ENCODE measurements at regions of chr16 and their contacts with region 1.

Region 1: DNA sequence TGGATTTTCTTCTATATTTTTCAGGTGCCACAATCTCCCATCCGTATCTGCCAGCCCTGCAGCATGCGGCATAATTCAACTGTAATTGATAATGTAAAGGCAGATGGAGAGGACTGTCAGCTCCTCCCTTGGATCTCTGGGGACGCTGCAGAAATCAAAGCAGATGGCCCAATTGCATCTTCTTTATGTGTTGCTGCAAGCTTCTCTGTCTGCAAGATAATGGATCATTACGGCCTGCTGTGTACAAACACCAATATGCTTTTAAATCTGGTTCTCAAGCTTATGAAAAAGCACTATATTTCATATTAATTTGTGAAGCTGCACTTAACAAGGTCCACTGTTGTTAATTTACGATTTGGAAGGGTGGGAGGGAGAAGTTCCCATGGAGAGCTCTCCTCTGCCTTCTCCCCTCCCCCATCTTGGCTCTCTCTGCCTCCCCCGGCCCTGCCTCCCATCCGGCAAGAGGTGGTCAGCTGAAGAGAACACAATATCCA is 607.5 kb downstream of the TOX3 start:
- DNase-seq: no peak
- ATAC-seq: no peak
- H3K4me3 ChIP-seq: no peak overlapping the region
- H3K27ac ChIP-seq: no peak overlapping the region
- H3K4me1 ChIP-seq: no peaks in the 10 kb centered on the region
- H3K27me3 ChIP-seq: no peaks in the 10 kb centered on the region
- CTCF ChIP-seq: no peak
- POLR2A ChIP-seq: no peak

Region 2: GRCh38 chr16:51875834-51876600 is 63.4 kb before region 1 on chr16:
- intact Hi-C with region 1: loop called in 1 of 10 experiments (anchors 10 kb)
- DNase-seq: no peak
- ATAC-seq: no peak
- H3K4me3 ChIP-seq: no peak overlapping the region
- H3K27ac ChIP-seq: no peak overlapping the region
- H3K4me1 ChIP-seq: no peaks in the 10 kb centered on the region
- H3K27me3 ChIP-seq: no peaks in the 10 kb centered on the region
- CTCF ChIP-seq: no peak
- POLR2A ChIP-seq: no peak

Measured in heart left ventricle (tissue), 16 donors.